Right cardiac atrium (tissue), 5 donors: ENCODE measurements at regions of chr10 and their contacts with region 1.

Region 1: GRCh38 chr10:77846718-77847630 is 79.6 kb downstream of the DLG5 start:
- DNase-seq: peak; percentile 67 to 91 (median 88)
- ATAC-seq: peak; percentile 72 to 80
- H3K4me3 ChIP-seq: no peak overlapping the region
- H3K27ac ChIP-seq: no peak overlapping the region
- H3K4me1 ChIP-seq: no peaks in the 10 kb centered on the region
- H3K27me3 ChIP-seq: no peaks in the 10 kb centered on the region

Region 2: DNA sequence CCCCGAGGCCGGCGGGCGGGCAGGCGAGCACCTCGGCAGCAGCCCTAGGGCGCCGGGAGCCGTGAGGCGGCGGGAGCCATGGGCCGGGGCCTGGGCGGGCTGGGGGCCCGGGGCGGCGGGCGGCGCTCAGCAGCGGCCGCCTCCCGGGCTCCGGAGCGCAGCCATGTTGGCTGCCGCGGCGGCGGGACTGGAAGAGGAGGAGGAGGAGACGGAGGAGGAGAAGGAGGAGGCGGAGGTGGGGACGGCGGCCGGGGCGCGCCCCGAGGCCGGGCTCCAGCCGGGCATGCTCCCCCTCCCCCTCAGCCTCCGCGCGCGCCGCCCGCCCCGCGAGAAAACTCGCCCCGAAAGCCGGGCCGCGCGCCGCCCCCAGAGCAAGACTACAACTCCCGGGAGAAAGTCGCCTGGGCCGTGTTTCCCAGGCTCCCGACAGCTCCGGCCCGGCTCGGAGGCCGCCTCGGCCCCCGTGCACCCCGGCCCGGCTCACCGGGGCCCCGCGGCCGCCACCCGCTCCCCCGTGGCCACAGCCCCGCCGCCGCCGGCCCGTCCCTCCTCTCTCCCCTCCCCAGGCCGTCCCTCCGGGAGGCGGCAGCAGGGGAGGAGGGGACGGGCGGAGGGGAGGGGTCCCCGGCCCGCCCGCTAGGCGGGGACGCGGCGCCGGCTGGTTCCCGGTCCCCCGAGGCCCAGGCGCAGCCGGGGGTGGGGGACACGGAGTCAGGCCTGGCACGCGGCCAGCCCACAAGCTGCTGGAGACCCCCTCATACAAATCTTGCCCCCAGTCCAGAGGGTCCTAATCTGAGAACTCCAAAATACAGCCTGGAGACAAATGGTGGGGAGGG is 79.8 kb after region 1 on chr10 and contains the start of gene DLG5:
- intact Hi-C with region 1: loop called in 1 of 4 experiments (anchors 5 kb)
- DNase-seq: peak; percentile 73 to 91 (median 91)
- ATAC-seq: peak; percentile 84 to 90
- H3K4me3 ChIP-seq: peak within 1 kb of the TSS; percentile 92
- H3K27ac ChIP-seq: peak within 1 kb of the TSS; percentile 36
- H3K4me1 ChIP-seq: peaks cover 4% of the 10 kb centered on the region
- H3K27me3 ChIP-seq: no peaks in the 10 kb centered on the region
- total RNA-seq, gene DLG5: 10.9 to 14.3 (median 12.6) TPM

Region 3: GRCh38 chr10:77970869-77971803 is 124.2 kb after region 1 on chr10:
- intact Hi-C with region 1: loop called in 3 of 4 experiments (anchors 10 kb)
- DNase-seq: peak; percentile 64 to 77 (median 74)
- ATAC-seq: peak; percentile 90
- H3K4me3 ChIP-seq: peak overlapping the region; percentile 19
- H3K27ac ChIP-seq: peak overlapping the region; percentile 70
- H3K4me1 ChIP-seq: peaks cover 6% of the 10 kb centered on the region
- H3K27me3 ChIP-seq: no peaks in the 10 kb centered on the region

Region 4: DNA sequence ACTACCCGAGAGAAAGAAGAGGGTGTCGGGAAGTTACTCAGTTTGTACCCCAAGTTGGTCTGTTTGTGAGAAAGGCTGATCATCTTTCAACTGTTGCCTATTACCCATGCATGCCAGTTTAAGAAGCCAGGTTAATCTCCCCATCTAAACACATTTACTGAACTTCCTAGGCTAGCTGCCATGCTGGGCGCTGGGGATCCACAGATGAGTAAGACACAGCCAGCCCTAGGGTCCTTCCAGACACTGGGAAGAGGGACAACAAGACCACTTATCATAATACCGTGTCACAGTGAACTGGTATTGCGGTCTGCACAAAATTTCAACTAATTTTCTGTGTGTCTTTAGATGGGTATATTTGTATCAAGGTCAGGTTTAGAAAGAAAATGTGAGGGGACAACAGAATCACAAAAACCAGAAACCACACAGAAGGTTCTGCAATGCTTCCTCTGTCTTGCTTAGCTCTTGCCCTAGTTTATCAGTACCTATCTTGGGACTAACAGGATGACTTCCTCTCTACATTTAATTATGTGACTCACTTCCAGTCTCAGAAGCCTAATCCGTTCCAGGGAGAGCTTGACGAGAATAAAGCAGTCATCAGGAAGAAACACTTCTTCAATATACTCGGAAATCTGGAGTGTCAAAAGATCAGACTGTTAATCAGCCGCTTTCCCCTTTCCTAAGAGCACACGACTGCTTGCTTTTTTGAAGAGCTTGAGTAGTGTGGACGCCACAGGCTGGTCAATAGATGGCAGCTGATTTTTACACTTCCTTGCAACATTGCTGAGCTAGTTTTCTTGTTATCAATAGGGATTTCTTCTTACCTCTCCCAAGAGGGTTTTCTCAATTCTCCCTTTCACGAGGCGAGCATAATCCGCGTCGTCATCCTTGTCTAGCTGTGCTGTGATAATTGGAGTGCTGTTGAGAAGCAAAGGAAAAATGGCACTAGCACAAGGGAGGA is 136.7 kb after region 1 on chr10:
- intact Hi-C with region 1: loop called (anchors 5 to 10 kb)
- DNase-seq: no peak
- ATAC-seq: peak; percentile 29 to 81
- H3K4me3 ChIP-seq: no peak overlapping the region
- H3K27ac ChIP-seq: no peak overlapping the region
- H3K4me1 ChIP-seq: no peaks in the 10 kb centered on the region
- H3K27me3 ChIP-seq: no peaks in the 10 kb centered on the region